Naive thymus-derived CD4-positive, alpha-beta T cell (primary cell): ENCODE measurements at regions of chr6 and their contacts with region 1.

Region 1: DNA sequence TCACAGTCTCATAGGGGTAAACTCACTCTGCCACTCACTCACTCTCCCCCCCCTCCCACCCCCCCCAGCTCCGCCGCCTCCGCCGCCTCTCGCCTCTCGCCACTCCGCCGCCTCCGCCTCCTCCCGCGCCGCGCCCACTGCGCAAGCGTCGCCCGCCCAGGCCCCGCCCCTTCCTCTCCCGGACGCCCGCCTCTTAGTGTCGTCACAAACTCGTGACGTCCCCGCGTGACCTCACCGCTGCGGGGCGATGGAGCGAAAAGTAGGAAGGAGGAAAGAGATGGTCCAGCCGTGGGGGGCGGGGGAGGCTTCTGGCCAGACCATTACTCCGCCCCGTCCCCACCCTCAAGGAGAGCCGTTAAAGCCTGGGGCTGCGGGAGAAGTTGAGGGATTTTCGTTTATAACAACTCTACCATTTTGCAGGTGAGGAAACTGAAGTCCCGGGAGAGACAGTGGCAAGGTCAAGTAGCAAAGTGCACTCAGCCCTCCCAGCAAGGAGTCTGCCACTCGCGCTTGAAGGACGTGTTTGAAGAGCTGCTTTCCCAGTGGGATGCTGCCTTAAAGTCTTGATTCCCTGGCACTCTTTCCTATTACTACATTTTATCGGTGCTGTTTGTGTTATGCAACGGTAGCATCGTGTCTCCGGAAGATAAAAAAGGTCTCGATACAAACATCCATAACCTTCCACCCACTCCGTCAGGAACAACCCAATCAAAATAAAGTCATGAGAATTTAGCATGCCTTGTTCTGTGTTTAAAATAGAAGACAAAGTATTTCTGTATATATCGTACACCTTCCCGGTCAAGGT is at the start of gene ILRUN:
- DNase-seq: peak; percentile 88 to 97 (median 93)
- ATAC-seq: peak; percentile 96
- H3K4me3 ChIP-seq: peak within 1 kb of the TSS; percentile 88
- H3K4me3 Mint-ChIP-seq: peak within 1 kb of the TSS; percentile 95 to 99 (median 98)
- H3K27ac ChIP-seq: peak within 1 kb of the TSS; percentile 94
- H3K27ac Mint-ChIP-seq: peak within 1 kb of the TSS; percentile 88 to 100 (median 99)
- H3K4me1 ChIP-seq: peaks cover 17 to 20% of the 10 kb centered on the region in 2 donors
- H3K4me1 Mint-ChIP-seq: peaks cover 30 to 60% (median 51%) of the 10 kb centered on the region in 7 donors
- H3K27me3 ChIP-seq: no peaks in the 10 kb centered on the region
- H3K27me3 Mint-ChIP-seq: peaks cover 0 to 4% (median 0%) of the 10 kb centered on the region in 5 donors
- total RNA-seq, gene ILRUN: 45.2 to 74.6 (median 53.7) TPM

Region 2: DNA sequence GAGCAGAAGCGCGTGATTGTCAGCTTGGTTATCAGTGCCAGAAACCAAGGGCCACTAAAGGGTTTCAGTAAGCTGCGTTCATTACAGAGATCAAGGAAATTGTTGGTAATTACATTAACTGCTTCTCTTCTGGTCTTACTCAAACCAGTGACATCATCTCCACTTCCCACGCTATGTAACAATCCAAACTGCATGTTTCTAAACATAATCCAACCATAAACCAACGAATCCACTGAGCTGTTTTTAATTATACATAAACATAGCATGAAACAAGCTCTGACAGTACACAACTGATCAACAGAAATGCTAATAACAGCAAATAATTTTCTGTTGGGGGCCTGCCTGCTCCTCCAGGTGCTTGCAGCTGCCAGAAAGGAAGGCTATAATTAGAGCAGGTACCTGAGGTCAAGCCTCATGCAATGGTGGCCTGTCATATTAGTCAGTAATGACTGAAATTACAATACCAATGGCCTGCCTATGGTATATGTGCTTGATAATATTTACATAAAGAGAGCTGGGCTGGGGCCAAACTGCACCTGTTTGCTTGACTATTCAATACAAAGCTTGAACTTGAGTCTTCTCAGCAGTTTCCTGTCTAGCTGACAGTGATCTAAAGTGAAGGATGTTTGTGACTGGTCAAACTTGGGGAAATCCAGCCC is 40.4 kb before region 1 on chr6:
- CTCF ChIA-PET with region 1: interaction called, 4 read pairs
- POLR2A ChIA-PET with region 1: interaction called, 19 read pairs
- intact Hi-C with region 1: loop called (anchors 1 kb)
- DNase-seq: peak in 2 of 9 donors; percentile 15 to 25
- ATAC-seq: peak; percentile 70
- H3K4me3 ChIP-seq: peak overlapping the region; percentile 55
- H3K4me3 Mint-ChIP-seq: peak overlapping the region; percentile 68 to 94 (median 86)
- H3K27ac ChIP-seq: peak overlapping the region; percentile 72
- H3K27ac Mint-ChIP-seq: peak overlapping the region; percentile 84 to 97 (median 93)
- H3K4me1 ChIP-seq: peaks cover 8 to 17% of the 10 kb centered on the region in 2 donors
- H3K4me1 Mint-ChIP-seq: peaks cover 26 to 59% (median 55%) of the 10 kb centered on the region in 7 donors
- H3K27me3 ChIP-seq: no peaks in the 10 kb centered on the region
- H3K27me3 Mint-ChIP-seq: no peaks in the 10 kb centered on the region

Region 3: GRCh38 chr6:34664256-34664971 is 32.5 kb before region 1 on chr6:
- CTCF ChIA-PET with region 1: interaction called, 11 read pairs
- POLR2A ChIA-PET with region 1: interaction called, 19 read pairs
- intact Hi-C with region 1: no loop called
- DNase-seq: no peak
- ATAC-seq: no peak
- H3K4me3 ChIP-seq: no peak overlapping the region
- H3K4me3 Mint-ChIP-seq: peak overlapping the region in 5 of 10 donors; percentile 6 to 55 (median 20)
- H3K27ac ChIP-seq: no peak overlapping the region
- H3K27ac Mint-ChIP-seq: peak overlapping the region in 8 of 9 donors; percentile 7 to 86 (median 40)
- H3K4me1 ChIP-seq: peaks cover 3 to 7% of the 10 kb centered on the region in 2 donors
- H3K4me1 Mint-ChIP-seq: peaks cover 34 to 70% (median 58%) of the 10 kb centered on the region in 7 donors
- H3K27me3 ChIP-seq: no peaks in the 10 kb centered on the region
- H3K27me3 Mint-ChIP-seq: no peaks in the 10 kb centered on the region

Region 4: DNA sequence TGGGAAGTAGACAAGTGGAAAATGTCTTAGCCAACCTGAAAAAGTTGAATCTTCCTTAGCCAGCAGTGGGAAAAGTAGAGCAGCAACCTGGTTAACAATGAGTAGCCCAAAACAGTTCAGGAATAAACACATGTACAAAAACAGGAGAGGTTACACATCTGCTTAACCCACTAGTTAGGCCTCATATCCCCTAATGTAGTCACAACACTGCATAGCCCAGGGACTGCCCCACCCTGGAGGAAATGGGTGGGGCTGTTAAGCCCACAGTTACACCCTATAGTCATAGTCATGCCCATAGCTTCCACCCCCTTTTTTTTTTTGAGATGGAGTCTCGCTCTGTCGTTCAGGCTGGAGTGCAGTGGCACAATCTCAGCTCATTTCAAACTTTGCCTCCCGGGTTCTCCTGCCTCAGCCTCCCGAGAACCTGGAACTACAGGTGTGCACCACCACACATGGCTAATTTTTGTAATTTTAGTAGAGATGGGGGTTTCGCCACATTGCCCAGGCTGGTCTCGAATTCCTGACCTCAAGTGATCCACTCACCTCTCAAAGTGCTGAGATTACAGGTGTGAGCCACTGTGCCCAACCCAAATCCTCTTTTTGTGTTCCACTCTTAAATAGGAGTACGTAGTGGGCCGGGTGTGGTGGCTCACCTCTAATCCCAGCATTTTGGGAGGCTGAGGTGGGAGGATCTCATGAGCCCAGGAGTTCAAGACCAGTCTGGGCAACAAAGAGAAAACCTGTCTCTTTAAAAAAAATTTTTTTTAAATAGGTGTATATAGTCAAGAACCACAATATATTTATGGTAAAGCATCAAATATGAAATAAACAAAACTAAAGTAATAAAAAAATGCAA is 24.9 kb before region 1 on chr6:
- CTCF ChIA-PET with region 1: interaction called, 4 read pairs
- POLR2A ChIA-PET with region 1: interaction called, 51 read pairs
- intact Hi-C with region 1: loop called (anchors 1 kb)
- DNase-seq: peak; percentile 27 to 83 (median 71)
- ATAC-seq: peak; percentile 99
- H3K4me3 ChIP-seq: peak overlapping the region; percentile 37
- H3K4me3 Mint-ChIP-seq: peak overlapping the region; percentile 72 to 88 (median 81)
- H3K27ac ChIP-seq: peak overlapping the region; percentile 75
- H3K27ac Mint-ChIP-seq: peak overlapping the region; percentile 92 to 97 (median 96)
- H3K4me1 ChIP-seq: peaks cover 35 to 48% of the 10 kb centered on the region in 2 donors
- H3K4me1 Mint-ChIP-seq: peaks cover 61 to 84% (median 74%) of the 10 kb centered on the region in 7 donors
- H3K27me3 ChIP-seq: no peaks in the 10 kb centered on the region
- H3K27me3 Mint-ChIP-seq: no peaks in the 10 kb centered on the region

Region 5: GRCh38 chr6:34771727-34772126 is 74.8 kb after region 1 on chr6:
- CTCF ChIA-PET with region 1: no interaction called
- POLR2A ChIA-PET with region 1: no interaction called
- intact Hi-C with region 1: no loop called
- DNase-seq: no peak
- ATAC-seq: no peak
- H3K4me3 ChIP-seq: no peak overlapping the region
- H3K4me3 Mint-ChIP-seq: no peak overlapping the region
- H3K27ac ChIP-seq: no peak overlapping the region
- H3K27ac Mint-ChIP-seq: peak overlapping the region in 2 of 9 donors; percentile 19 to 48
- H3K4me1 ChIP-seq: peaks cover 0 to 10% of the 10 kb centered on the region in 2 donors
- H3K4me1 Mint-ChIP-seq: peaks cover 9 to 27% (median 18%) of the 10 kb centered on the region in 7 donors
- H3K27me3 ChIP-seq: no peaks in the 10 kb centered on the region
- H3K27me3 Mint-ChIP-seq: no peaks in the 10 kb centered on the region

Region 6: GRCh38 chr6:35259194-35259947 is 562.4 kb after region 1 on chr6 and contains the start of gene ZNF76:
- CTCF ChIA-PET with region 1: no interaction called
- POLR2A ChIA-PET with region 1: no interaction called
- intact Hi-C with region 1: loop called in 1 of 2 experiments (anchors 10 kb)
- DNase-seq: peak; percentile 89 to 93 (median 92)
- ATAC-seq: peak; percentile 88
- H3K4me3 ChIP-seq: peak within 1 kb of the TSS; percentile 65
- H3K4me3 Mint-ChIP-seq: peak within 1 kb of the TSS; percentile 85 to 99 (median 97)
- H3K27ac ChIP-seq: peak within 1 kb of the TSS; percentile 95
- H3K27ac Mint-ChIP-seq: peak within 1 kb of the TSS; percentile 89 to 99 (median 97)
- H3K4me1 ChIP-seq: peaks cover 15 to 17% of the 10 kb centered on the region in 2 donors
- H3K4me1 Mint-ChIP-seq: peaks cover 37 to 64% (median 50%) of the 10 kb centered on the region in 7 donors
- H3K27me3 ChIP-seq: no peaks in the 10 kb centered on the region
- H3K27me3 Mint-ChIP-seq: no peaks in the 10 kb centered on the region
- total RNA-seq, gene ZNF76: 44.4 to 110 (median 77.2) TPM